ENCODE measurements at regions of chr2 and their contacts with region 1.

Region 1: DNA sequence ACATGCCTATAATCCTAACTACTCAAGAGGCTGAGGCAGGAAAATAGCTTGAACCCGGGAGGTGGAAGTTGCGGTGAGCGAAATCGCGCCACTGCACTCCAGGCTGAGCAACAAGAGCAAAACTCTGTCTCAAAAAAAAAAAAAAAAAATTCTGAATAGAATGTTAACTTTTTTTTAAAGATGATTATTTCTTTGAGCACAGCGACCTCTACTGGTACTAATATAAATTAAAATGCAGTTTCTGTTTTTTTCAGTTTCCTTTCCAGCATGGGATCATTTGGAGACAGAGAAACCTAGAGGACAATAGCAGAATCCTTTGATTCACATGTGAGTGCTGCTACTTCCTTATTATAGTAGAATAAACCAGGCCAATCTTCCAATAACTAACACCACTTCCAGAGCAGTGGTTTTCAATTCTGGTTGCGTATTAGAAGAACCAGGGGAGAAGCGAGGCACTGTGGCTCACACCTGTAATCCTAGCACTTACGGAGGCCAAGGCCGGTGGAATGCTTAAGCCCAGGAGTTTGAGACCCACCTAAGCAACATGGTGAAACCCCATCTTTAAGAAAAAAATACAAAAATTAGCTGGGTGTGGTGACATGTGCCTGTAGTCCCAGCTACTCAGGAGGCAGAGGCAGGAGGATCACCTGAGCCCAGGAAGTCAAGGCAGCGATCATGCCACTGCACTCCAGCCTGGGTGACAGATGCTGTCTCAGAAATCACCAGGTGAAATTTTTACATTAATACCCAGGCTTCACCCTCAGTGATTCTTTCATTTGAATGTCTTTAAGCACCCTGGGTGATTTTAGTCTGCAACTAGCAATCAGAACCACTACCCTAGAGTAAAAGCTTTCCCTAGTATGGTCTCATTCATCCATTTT is 10.1 kb downstream of the SRSF7 start:
- DNase-seq: peak; percentile 78

Region 2: GRCh38 chr2:38554973-38555595 is 186.0 kb before region 1 on chr2:
- in situ Hi-C with region 1: loop called (anchors 25 kb)
- DNase-seq: peak; percentile 86

Region 3: DNA sequence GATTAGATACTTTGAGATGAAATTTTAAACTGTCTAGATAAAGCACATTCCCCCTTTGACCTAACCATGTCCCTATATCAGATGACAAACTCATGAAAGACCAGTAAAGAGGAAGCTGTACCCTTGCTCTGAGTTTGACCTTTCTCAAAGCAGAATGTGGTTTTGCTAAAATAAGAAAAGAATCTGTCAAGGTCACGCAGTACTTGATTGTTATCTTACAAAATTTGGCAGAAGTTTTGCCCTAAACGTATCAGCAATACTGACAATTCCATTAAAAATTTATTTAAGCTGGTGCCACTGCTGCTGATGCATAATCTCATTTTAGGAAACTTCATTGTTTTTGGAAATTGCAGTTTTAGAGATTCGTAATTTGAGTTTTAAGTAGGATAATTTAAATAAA is 106.4 kb before region 1 on chr2:
- in situ Hi-C with region 1: no loop called
- DNase-seq: peak; percentile 82

Region 4: DNA sequence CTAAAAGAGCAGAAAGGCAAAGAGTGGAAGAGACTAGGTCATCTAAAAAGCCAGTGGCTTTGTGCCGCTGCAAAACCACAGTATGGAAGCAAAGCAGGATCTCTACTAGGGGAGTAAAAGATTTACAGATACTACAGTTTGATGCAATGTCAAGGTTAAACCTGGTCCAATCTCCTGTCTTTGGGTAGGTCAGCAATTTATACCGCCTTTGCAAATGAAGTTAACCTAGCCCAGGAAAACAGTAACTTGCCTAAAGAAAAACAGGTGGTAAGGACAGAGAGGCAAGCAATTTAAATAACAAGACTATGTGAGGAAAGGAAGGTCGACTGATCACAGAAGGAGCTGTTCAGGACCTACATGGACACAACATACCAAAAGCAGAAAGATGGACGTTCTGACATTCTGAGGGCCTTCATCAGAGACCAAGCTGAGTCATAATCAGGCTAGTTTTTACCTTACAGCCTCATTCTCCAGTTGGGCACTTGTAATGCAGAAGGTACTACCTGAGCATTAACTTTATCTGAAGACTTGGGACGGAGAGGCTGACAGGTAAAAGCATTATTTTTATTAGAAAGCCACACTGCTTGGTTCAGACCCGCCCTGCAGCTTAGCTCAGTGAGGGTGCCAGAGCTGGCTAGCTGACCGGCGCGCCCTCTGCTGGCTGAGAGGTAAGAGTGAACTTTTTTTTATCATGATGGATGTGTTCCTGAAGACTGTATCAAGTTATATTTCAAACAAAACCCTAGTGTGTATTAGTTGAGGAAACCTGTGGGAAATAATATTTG is 486.7 kb after region 1 on chr2:
- in situ Hi-C with region 1: no loop called
- DNase-seq: peak; percentile 84